ENCODE measurements at regions of chr17 and their contacts with region 1.

Region 1: DNA sequence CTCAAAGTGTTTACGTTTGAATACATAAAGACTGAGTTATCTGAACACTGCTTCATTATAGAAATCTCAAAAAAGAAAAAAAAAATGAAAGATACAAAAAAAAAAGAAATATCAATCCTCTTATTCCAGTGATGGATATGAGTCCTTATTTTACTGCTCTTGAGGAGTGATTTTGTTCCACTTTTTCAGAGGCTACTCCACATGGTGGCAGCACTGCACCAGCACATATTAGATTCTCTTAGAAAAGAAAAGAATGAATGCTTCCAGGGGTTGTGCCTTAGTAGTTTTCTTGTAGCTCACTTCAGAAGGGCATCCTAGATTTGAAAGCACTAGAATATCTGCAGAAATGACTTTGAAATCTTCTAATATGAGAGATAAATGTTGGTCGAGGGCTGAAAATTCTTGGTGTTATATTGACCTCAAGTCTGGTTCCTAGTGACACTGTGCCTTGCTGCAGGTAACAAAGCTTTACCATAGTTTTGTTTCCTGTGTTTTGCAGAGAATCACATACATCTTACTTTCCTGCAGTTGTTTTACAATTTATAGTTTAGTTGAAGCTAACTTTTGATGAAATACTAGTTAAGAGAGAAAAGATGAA is 25.9 kb downstream of the AP2B1 start:
- DNase-seq: peak; percentile 52
- H3K4me3 ChIP-seq: no peak overlapping the region; a peak in 1 of 4 replicates
- H3K27ac ChIP-seq: no peak overlapping the region
- H3K4me1 ChIP-seq: no peaks in the 10 kb centered on the region
- H3K27me3 ChIP-seq: no peaks in the 10 kb centered on the region
- CTCF ChIP-seq: peak; percentile 85
- EP300 ChIP-seq: no peak
- RAD21 ChIP-seq: peak; percentile 75

Region 2: DNA sequence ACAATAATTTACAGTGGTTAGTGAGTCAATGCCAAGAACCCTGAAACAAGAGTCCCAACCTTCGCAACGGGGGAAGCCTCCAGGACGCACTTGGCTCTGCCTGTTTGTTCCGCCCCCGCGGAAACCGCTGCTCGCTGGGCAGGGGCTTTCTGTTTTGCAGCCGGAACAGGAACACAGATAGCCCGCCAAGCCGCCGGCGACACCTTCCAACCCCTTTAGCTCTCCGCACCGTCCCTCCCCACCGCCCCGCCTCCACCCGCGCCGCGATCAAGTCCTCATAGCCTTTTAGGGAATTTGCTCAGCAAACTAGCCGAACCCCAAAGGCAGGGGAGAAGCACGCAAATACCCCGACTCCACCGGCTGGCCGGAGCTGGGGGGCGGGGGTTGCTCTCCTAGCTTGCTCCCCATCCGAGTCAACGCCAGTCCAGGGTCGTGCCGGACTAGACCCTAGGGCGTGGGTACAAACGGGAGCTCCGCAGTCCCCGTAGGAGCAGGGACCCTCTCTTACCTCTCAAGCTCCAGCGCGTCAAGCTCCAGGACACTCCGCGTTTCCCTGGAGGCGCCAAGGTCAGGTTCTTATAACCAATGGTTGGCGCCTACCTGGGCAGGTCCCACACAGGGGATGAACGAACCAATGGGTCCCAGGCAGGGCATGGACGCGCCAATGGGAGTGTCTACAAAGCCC is 164.7 kb before region 1 on chr17 and contains the start of gene SLFN13:
- CTCF ChIA-PET with region 1: no interaction called
- POLR2A ChIA-PET with region 1: no interaction called
- DNase-seq: peak; percentile 17
- H3K4me3 ChIP-seq: peak within 1 kb of the TSS in 1 of 2 experiments; percentile 58; a peak in 2 of 4 replicates
- H3K27ac ChIP-seq: no peak within 1 kb of the TSS
- H3K4me1 ChIP-seq: no peaks in the 10 kb centered on the region
- H3K27me3 ChIP-seq: peaks cover 82% of the 10 kb centered on the region
- CTCF ChIP-seq: no peak
- EP300 ChIP-seq: no peak
- RAD21 ChIP-seq: no peak
- polyA plus RNA-seq, gene SLFN13: under 0.01 TPM in 1 of 2 replicates, not detected in the other

Region 3: GRCh38 chr17:35498448-35499178 is 114.4 kb before region 1 on chr17:
- CTCF ChIA-PET with region 1: no interaction called
- POLR2A ChIA-PET with region 1: no interaction called
- DNase-seq: no peak
- H3K4me3 ChIP-seq: no peak overlapping the region
- H3K27ac ChIP-seq: no peak overlapping the region
- H3K4me1 ChIP-seq: no peaks in the 10 kb centered on the region
- H3K27me3 ChIP-seq: peaks cover 66% of the 10 kb centered on the region
- CTCF ChIP-seq: no peak
- EP300 ChIP-seq: no peak
- RAD21 ChIP-seq: no peak

Region 4: DNA sequence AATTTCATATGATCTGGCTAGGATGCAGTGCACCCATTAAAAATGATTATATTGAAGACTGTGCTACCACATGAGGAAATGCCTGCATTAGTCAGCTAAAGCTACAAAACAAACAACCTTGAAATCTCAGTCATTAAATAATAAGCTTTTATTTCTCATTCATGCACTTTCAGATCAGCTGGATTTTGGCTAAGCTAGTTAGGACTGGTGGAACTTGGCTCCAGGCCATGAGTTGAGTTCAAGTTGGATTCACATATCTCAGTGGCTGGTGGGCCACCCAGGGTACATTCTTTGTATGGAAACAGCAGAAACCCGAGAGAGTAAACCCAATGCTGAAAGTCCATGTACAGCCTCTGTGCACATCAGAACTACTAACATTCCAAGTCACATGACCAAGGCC is 69.2 kb before region 1 on chr17:
- CTCF ChIA-PET with region 1: no interaction called
- POLR2A ChIA-PET with region 1: no interaction called
- DNase-seq: no peak
- H3K4me3 ChIP-seq: no peak overlapping the region
- H3K27ac ChIP-seq: no peak overlapping the region
- H3K4me1 ChIP-seq: no peaks in the 10 kb centered on the region
- H3K27me3 ChIP-seq: peaks cover 44% of the 10 kb centered on the region
- CTCF ChIP-seq: no peak
- EP300 ChIP-seq: no peak
- RAD21 ChIP-seq: no peak

Region 5: DNA sequence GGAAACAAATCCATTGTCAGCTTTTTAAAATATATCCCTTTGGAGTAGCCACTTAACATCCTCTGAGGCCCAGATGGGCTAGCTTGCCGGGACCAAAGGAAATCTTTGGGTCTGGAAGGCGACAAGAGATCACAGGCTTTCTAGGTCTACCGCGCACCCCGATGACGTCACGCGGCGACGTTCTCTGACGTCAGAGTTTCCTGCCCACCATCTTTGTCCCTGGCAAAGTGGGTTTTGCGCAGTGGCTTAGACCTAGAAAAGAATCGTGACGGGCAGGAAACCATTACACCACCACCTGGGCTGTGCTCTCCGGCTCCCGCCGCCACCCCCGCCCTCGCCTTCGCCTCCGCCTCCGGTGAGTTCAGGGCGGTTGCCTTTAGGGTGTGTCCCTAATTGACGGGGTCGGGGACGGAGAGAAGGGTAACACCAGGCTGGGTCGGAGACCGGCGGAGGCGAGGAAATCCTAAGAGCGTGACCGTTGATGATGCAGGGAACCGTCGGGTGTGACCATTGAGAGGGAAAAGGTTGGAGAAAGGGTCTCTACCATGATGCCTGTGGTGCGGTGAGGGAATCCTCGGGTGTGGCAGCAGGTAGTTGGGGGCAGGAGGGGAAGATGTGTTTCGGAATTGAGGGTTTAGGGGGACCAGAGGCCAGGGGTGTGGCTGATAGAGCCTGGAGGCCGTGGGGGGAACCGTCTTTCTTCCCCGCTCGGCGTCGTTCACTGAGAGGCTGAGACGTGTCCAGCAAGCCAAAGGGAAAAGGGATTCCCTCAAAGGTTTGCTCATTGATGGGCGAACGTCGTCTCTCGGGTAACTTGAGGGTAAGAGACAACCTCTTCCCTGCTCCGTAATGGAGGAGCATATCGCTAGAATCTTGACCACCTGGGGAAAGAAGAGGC is 25.7 kb before region 1 on chr17 and contains the start of gene AP2B1:
- CTCF ChIA-PET with region 1: interaction called, 15 read pairs
- POLR2A ChIA-PET with region 1: no interaction called
- DNase-seq: peak; percentile 88
- H3K4me3 ChIP-seq: peak within 1 kb of the TSS; percentile 73 to 94
- H3K27ac ChIP-seq: peak within 1 kb of the TSS; percentile 85 to 93
- H3K4me1 ChIP-seq: peaks cover 5 to 18% of the 10 kb centered on the region in 2 experiments; a peak in 2 of 4 replicates
- H3K27me3 ChIP-seq: no peaks in the 10 kb centered on the region
- CTCF ChIP-seq: no peak
- EP300 ChIP-seq: no peak; a peak in 1 of 4 replicates
- RAD21 ChIP-seq: no peak
- polyA plus RNA-seq, gene AP2B1: 97.8 and 135 TPM in 2 replicates

Region 6: DNA sequence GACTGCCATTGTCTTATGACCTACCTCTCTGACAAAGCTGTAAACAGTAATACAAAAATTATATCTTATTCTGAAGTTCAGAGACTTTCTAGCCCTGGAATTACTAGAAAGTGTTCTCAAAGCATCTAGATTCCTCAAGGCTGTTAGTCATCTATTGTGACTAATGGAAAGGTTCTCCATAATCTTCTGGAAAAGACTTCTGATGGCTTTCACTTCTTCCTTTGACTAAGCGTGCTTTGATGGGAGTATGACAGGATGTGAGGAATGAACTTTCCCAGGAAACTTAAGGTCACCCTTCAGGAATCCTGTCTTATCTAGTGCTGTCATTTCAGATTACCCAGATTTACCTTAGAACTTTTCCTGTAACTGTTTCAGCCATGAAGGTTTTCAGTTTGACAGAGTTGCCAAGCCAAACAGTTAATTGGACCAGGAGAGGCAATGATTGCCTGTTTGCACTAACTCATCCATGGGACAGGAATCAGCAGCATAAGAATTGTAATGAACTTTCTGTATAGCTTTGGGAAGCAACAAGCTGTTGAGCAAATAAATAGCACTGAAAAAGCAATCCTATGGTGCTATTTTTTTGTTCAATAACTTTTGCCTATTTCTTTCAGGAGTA is 17.6 kb after region 1 on chr17:
- CTCF ChIA-PET with region 1: interaction called, 55 read pairs
- POLR2A ChIA-PET with region 1: interaction called, 4 read pairs
- DNase-seq: no peak
- H3K4me3 ChIP-seq: no peak overlapping the region
- H3K27ac ChIP-seq: peak overlapping the region in 1 of 2 experiments; percentile 60; a peak in 2 of 4 replicates
- H3K4me1 ChIP-seq: 0 out of 4 replicates have a peak, but pooled peaks cover 0 to 5% of the 10 kb centered on the region in 2 experiments
- H3K27me3 ChIP-seq: no peaks in the 10 kb centered on the region
- CTCF ChIP-seq: no peak
- EP300 ChIP-seq: no peak
- RAD21 ChIP-seq: no peak

Region 7: DNA sequence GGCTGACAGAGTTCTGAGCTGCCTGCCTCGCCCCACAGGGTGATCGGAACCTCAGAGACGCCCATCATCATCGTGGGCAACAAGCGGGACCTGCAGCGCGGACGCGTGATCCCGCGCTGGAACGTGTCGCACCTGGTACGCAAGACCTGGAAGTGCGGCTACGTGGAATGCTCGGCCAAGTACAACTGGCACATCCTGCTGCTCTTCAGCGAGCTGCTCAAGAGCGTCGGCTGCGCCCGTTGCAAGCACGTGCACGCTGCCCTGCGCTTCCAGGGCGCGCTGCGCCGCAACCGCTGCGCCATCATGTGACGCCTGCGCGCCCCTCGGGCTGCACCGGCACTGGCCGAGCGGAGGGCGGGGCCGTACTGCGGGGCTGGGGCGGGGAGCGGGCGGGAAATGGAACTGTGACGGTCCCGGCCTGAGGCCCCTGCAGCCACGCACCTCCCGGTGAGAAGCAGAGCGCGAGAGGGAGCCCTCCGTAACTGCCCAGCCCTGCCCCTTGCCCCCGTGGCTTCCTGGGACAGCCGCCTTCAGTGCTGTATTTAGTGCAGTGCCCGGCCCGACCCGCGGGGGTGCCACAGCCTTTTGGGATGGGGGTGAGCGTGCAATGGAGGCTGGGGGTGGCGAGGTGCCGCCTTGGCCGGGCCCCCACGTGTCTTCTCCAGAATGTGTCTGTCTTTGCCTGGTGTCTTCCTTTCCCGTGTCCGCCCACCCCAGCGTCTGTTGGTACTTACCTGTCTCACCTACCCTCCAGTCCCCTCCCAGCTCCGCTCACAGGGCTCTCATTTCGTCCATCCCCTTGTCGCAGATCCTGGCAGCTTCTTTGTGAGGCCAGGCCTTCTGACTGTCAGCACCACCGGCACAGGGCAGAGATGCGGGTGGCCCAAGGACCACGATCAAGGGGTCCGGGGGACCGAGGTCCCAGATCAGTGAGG is 128.2 kb after region 1 on chr17:
- CTCF ChIA-PET with region 1: interaction called, 275 read pairs
- POLR2A ChIA-PET with region 1: no interaction called
- DNase-seq: peak; percentile 74
- H3K4me3 ChIP-seq: no peak overlapping the region
- H3K27ac ChIP-seq: no peak overlapping the region
- H3K4me1 ChIP-seq: no peaks in the 10 kb centered on the region; a peak in 1 of 4 replicates
- H3K27me3 ChIP-seq: no peaks in the 10 kb centered on the region; the same call in 1 of the 2 replicates
- CTCF ChIP-seq: no peak
- EP300 ChIP-seq: no peak
- RAD21 ChIP-seq: no peak

Region 8: DNA sequence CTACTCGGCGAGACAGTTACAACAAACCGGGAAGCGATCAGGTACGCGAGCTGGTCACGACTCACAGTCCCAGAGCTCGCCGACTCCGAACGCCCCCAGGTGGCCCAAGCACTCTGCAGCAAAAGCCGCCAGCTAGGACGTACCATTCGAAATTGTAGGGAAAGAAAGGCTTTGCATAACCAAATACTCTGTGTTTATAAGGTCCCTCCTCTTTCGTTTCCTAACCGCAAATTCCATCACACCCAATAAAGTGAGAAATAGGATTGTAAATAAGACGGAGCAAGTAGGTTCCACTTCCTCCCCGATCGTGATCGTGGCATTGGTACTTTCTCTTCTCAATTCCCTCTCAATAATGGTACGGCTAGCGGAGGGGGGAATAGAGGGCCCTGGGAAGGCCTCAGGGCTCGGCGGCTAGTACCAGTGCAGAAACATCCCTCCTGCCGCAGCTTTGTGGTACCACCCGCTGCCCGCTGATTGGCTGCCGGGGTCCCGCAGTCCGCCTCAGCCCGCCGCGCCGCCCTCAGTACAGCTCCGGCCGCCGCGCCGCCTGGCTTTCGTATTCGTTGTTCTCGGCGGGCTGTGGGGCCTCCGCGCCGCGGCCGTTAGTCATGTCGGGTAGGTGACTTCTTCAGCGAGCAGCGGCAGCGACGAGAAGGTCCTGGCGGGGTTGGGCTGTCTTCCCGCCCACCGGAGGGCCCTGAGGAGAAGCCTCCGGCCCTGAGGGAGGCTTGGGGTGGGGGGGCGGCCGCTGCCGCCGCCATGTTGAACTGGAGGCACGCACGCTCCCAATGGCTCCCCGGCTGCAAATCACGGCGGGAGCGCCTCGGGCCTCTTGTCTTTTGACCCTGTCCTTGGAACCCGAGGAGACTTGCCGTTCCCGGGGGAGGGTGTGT is 196.2 kb after region 1 on chr17 and contains the start of gene TAF15:
- CTCF ChIA-PET with region 1: interaction called, 20 read pairs
- POLR2A ChIA-PET with region 1: no interaction called
- DNase-seq: peak; percentile 95
- H3K4me3 ChIP-seq: peak within 1 kb of the TSS; percentile 77 to 80
- H3K27ac ChIP-seq: peak within 1 kb of the TSS; percentile 75 to 99
- H3K4me1 ChIP-seq: peaks cover 0 to 21% of the 10 kb centered on the region in 2 experiments; a peak in 3 of 4 replicates
- H3K27me3 ChIP-seq: no peaks in the 10 kb centered on the region
- CTCF ChIP-seq: peak; percentile 78
- EP300 ChIP-seq: peak in 1 of 2 experiments; percentile 25; a peak in 1 of 4 replicates
- RAD21 ChIP-seq: peak; percentile 52
- polyA plus RNA-seq, gene TAF15: 67.5 and 78.0 TPM in 2 replicates